ENCODE measurements at regions of chr15 and their contacts with region 1.

Region 1: DNA sequence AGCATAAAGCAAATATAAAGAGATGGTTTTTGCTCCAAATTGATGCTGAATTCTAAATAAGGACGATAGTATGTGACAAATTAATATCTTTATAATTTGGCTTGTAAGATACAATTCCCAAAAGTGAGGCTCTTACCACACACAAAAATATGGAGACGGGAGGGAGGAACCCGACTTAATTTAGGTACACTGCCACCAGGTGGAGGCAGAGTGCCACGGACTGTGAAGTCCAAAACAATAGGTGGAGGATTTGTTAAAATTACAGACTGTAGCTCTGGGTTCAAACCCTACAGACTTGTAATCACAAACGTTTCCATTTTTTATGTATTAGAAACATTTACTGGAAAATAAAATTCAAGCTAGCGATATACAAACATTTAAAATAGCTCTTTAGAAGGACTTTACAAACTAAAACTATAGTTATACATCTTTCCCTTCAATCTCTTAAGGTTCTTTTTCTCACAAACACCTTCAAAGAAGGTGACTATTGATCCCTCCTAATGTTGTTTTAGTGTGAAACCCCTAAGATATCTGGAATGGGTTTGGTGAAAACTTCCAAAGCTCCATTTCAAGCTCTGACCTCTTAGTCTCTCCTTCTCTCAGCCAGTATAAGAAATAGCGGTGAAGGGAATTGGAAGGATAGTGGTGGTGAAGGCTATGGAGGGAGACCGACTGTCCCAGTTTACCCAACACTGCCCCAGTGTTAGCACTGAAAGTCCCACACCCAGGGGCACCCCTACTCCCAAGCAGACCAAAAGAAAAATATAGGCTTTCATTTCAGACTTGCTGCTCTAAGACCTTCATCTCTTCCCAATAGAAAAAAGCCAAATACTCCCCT is 89.7 kb downstream of the AQP9 start:
- DNase-seq: peak; percentile 80
- ATAC-seq: peak; percentile 77
- H3K4me3 Mint-ChIP-seq: no peak overlapping the region
- H3K27ac Mint-ChIP-seq: no peak overlapping the region
- H3K4me1 Mint-ChIP-seq: peaks cover 15% of the 10 kb centered on the region
- H3K27me3 Mint-ChIP-seq: peaks cover 13% of the 10 kb centered on the region

Region 2: DNA sequence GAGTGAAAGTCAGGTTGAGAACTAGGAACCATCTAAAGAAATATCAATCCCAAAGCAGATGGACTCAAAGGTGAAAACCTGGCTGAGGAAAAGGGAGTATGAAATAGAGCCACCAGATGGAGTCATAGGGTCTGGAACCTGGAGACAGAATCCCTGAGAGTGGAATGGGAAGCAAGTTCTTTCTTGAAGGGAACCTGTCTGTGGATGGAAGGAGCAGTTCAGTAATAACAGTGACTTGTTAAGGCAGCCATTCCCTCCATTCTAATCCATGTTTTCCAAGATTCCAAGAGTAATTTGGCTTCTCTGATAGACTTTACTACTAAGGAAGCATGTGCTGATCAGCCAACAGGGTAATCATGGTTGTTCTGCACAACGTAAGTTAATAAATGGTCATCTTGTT is 112.2 kb before region 1 on chr15:
- CTCF ChIA-PET with region 1: no interaction called
- POLR2A ChIA-PET with region 1: no interaction called
- DNase-seq: no peak
- ATAC-seq: no peak
- H3K4me3 Mint-ChIP-seq: no peak overlapping the region
- H3K27ac Mint-ChIP-seq: no peak overlapping the region
- H3K4me1 Mint-ChIP-seq: no peaks in the 10 kb centered on the region
- H3K27me3 Mint-ChIP-seq: peaks cover 14% of the 10 kb centered on the region

Region 3: DNA sequence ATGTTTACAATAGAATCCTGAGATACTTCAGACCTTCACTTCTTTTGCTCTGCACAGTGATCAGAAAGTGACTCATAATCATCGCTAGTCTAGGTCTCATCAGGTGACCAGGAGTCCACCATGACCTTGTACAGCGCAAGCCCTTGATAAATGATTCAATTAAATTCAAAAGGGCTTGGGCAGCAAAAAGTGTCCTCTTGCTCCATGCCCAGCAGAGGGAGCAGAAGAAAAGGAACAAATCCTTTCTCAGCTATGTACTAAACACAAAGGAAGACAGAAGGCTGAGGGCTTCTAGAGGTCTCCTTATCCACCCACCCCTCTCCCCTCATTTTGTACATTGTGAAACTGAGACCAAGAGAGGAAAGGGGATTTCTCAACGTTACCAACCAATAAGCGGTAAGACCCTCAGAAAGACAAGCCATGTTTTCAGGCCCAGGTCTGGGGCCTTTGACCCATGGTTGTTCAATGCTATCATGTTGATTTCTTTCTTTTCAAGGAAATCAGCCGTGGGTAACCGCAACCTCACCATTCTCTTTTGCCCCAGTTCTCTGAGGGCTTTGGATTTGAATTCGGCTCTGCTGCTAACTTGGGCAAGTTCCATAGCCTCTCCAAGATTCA is 14.9 kb before region 1 on chr15:
- CTCF ChIA-PET with region 1: interaction called, 17 read pairs
- POLR2A ChIA-PET with region 1: no interaction called
- DNase-seq: no peak
- ATAC-seq: no peak
- H3K4me3 Mint-ChIP-seq: no peak overlapping the region
- H3K27ac Mint-ChIP-seq: no peak overlapping the region
- H3K4me1 Mint-ChIP-seq: no peaks in the 10 kb centered on the region
- H3K27me3 Mint-ChIP-seq: peaks cover 7% of the 10 kb centered on the region

Region 4: DNA sequence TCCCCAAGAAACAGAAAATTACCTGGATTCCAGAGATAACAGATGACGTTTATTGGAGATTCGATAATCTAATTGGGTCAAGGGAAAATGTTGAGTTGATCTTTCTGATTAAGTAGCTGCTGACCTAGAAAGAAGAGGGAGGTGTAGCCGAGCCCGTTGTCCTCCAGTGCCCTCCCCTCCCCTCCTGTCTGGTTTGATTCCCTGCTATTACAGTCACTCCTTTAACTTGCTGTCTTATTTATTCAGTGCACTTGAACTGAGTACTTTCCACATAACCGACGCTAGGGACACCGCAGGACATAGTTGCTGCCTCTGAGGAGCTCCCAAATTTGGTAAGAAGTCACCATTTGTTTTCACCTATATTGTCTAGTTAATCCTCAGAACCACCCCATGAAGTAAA is 13.9 kb after region 1 on chr15:
- CTCF ChIA-PET with region 1: interaction called, 25 read pairs
- POLR2A ChIA-PET with region 1: no interaction called
- DNase-seq: no peak
- ATAC-seq: no peak
- H3K4me3 Mint-ChIP-seq: no peak overlapping the region
- H3K27ac Mint-ChIP-seq: no peak overlapping the region
- H3K4me1 Mint-ChIP-seq: peaks cover 4% of the 10 kb centered on the region
- H3K27me3 Mint-ChIP-seq: peaks cover 3% of the 10 kb centered on the region

Region 5: DNA sequence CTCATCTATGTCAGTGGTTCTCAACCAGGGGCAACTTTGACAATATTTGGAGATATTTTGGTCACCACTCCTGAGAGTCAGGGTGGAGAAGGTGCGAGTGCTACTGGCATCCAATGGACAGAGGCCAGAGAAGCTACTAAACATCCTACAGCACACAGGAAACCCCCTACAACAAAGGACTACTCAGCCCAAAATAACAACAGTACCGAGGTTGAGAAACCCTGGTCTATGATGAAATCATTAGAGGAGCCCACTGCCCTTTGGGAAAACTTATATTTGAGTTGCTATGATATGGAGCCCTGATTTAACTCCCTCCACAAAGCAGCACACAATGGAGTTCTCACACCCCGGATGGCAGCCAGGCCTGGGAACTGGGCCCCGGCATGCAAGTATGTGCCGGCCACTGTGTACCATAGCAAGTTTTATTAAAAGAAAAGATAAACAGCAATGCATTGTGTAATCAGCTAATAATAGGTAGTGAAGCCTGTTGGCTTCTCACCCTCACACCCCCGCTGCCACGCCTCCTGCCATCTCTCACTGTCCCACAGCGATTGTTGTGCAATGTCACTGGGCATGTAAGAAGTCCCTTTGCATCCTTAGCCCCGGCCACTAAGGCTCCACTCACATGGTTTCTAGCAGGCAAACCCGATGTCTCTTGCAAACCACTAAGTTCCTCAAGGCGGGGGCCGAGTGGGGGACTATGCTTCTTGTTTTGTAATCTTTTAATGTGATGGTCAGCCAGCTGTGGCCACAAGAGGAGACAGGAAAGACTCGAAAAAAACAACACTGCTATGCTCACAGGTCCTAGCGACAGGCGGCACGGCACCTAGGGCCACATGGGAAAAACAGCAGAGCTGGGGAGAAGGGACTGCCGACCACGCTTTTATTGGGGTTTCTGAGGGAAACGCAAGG is 20.2 kb after region 1 on chr15:
- CTCF ChIA-PET with region 1: interaction called, 25 read pairs
- POLR2A ChIA-PET with region 1: no interaction called
- DNase-seq: no peak
- ATAC-seq: no peak
- H3K4me3 Mint-ChIP-seq: no peak overlapping the region
- H3K27ac Mint-ChIP-seq: no peak overlapping the region
- H3K4me1 Mint-ChIP-seq: peaks cover 19% of the 10 kb centered on the region
- H3K27me3 Mint-ChIP-seq: peaks cover 3% of the 10 kb centered on the region

Region 6: GRCh38 chr15:58261378-58261777 is 33.5 kb after region 1 on chr15:
- CTCF ChIA-PET with region 1: interaction called, 10 read pairs
- POLR2A ChIA-PET with region 1: no interaction called
- DNase-seq: no peak
- ATAC-seq: no peak
- H3K4me3 Mint-ChIP-seq: no peak overlapping the region
- H3K27ac Mint-ChIP-seq: no peak overlapping the region
- H3K4me1 Mint-ChIP-seq: peaks cover 3% of the 10 kb centered on the region
- H3K27me3 Mint-ChIP-seq: peaks cover 9% of the 10 kb centered on the region

Region 7: GRCh38 chr15:58407376-58407775 is 179.5 kb after region 1 on chr15:
- CTCF ChIA-PET with region 1: no interaction called
- POLR2A ChIA-PET with region 1: no interaction called
- DNase-seq: no peak
- ATAC-seq: no peak
- H3K4me3 Mint-ChIP-seq: no peak overlapping the region
- H3K27ac Mint-ChIP-seq: no peak overlapping the region
- H3K4me1 Mint-ChIP-seq: peaks cover 25% of the 10 kb centered on the region
- H3K27me3 Mint-ChIP-seq: no peaks in the 10 kb centered on the region

Region 8: DNA sequence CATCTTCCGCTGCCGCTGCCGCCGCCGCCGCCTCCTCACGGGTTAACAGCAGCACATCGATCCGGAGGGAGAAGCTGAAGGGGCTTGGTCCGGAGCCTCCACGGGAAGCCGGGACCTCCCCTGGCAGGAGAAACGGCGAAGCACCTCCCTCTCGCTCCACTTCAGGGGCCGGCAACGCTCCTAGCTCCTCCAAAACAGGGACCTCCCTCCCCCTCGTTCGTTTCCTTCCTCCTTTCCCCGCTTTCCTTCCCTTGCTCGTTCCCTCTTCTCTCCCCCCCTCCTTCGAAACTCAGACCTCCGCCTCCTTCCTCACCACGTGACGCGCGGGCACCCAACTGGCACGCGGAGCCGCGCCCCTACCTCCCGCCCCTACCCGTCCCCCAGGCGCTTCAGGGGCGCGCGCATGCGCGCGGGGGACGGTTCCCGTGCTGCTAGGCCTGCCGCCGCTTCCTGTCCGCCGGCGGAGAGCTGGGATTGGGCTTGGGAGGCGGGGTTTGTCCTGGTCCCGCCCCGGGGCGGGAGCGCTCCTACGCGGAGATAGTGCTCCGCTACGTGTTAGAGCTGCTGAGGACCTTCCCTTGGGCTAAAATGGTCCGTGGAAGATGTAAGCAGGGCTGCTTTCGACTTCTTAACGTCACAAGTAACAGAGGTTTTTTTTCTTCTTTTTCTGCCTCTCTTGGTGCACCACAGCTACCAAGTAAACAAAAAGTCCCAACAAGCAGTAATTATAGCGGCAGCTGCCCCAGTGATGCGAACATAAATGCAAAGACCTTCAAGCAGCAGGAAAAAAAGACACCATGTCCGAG is 521.8 kb after region 1 on chr15 and contains the start of gene ADAM10:
- CTCF ChIA-PET with region 1: interaction called, 10 read pairs
- POLR2A ChIA-PET with region 1: no interaction called
- DNase-seq: peak; percentile 99
- ATAC-seq: peak; percentile 92
- H3K4me3 Mint-ChIP-seq: peak within 1 kb of the TSS; percentile 100
- H3K27ac Mint-ChIP-seq: peak within 1 kb of the TSS; percentile 96
- H3K4me1 Mint-ChIP-seq: peaks cover 34% of the 10 kb centered on the region
- H3K27me3 Mint-ChIP-seq: no peaks in the 10 kb centered on the region
- total RNA-seq, gene ADAM10: 133 to 135 TPM

Region 9: DNA sequence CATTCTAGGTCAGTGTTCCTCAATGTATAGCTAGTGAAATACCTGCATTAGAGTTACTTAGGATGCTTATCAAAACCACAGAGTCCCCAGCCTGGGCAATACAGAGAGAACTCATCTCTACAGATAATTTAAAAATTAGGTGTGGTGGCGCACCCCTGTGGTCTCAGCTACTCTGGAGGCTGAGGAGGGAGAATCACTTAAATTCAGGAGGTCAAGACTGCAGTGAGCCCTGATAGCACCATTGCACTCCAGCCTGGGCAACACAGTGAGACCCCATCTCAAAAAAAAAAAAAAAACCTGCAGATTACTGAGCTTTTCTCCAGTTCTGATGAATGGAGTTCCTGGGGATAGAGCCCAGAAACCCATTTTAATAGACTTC is 533.1 kb after region 1 on chr15:
- CTCF ChIA-PET with region 1: interaction called, 11 read pairs
- POLR2A ChIA-PET with region 1: no interaction called
- DNase-seq: peak; percentile 33
- ATAC-seq: no peak
- H3K4me3 Mint-ChIP-seq: no peak overlapping the region
- H3K27ac Mint-ChIP-seq: no peak overlapping the region
- H3K4me1 Mint-ChIP-seq: peaks cover 6% of the 10 kb centered on the region
- H3K27me3 Mint-ChIP-seq: peaks cover 2% of the 10 kb centered on the region

Measured in activated CD8-positive, alpha-beta T cell treated with anti-CD3 and anti-CD28 coated beads, Interleukin-2, amount 10 ng/mL, durations not matched to agents 7 days and 5 days (primary cell).